ENCODE measurements at regions of chr7 and their contacts with region 1.

Region 1: DNA sequence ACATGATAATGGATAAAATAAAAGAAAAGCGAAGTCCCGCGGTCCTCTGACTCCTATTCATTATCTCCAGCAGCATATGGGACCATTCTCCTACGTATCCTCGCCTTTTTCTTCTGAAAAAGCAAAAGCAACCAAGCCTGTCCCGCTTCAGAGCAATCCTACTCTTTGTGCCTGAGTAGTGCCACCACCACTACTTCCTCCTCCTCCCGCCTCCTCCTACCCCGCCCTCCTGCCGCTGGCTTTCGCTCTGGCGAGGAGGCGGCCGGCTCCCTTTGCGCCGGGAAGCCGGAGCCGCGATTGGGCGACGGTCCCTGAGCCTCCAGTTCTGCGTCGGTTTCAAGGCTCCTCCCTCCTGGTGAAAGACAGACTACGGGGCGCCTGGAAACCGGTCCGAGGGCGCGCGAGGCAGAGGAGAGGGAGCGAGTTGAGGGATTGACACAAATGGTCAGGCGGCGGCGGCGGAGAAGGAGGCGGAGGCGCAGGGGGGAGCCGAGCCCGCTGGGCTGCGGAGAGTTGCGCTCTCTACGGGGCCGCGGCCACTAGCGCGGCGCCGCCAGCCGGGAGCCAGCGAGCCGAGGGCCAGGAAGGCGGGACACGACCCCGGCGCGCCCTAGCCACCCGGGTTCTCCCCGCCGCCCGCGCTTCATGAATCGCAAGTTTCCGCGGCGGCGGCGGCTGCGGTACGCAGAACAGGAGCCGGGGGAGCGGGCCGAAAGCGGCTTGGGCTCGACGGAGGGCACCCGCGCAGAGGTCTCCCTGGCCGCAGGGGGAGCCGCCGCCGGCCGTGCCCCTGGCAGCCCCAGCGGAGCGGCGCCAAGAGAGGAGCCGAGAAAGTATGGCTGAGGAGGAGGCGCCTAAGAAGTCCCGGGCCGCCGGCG is at the start of gene FZD1:
- DNase-seq: peak; percentile 93
- H3K4me3 ChIP-seq: peak within 1 kb of the TSS; percentile 75
- CTCF ChIP-seq: peak; percentile 9

Region 2: GRCh38 chr7:91082852-91083495 is 181.3 kb before region 1 on chr7:
- CTCF ChIA-PET with region 1: interaction called, 10 read pairs
- POLR2A ChIA-PET with region 1: no interaction called
- DNase-seq: no peak
- H3K4me3 ChIP-seq: no peak overlapping the region
- CTCF ChIP-seq: peak; percentile 41

Region 3: GRCh38 chr7:91089382-91089963 is 174.8 kb before region 1 on chr7:
- CTCF ChIA-PET with region 1: interaction called, 15 read pairs
- POLR2A ChIA-PET with region 1: no interaction called
- DNase-seq: no peak
- H3K4me3 ChIP-seq: no peak overlapping the region; the same call in 1 of the 2 replicates
- CTCF ChIP-seq: peak; percentile 40

Region 4: DNA sequence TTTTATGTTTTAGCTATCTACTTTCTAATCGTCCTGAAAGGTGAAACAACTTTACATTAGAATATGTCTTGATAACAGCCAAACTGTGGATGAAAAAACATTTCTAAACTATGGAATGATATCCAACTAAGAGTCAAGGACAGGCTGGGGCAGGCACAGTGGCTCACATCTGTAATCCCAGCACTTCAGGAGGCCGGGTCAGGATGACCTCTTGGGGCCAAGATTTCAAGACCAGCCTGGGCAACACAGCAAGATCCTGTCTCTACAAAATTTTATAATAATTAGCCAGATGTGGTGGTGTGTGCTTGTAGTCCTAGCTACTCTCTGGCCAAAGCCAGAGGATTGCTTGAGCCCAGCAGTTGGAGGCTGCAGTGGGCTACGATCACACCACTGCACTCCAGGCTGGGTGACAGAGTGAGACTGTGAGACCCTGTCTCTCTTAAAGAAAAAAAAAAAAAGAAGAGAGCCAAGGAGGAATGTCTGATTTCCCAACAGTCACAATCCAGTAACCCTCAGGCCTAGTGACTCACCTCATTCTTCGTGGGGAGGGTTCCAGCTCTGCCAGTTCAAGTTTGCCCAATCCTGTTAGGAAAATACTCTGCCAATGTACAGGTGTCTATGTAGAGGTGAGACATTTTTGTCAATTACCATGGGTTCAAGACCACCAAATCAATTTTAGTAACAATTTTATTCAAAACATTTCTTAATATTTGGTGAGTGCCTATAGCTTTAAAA is 14.6 kb before region 1 on chr7:
- CTCF ChIA-PET with region 1: interaction called, 32 read pairs
- POLR2A ChIA-PET with region 1: no interaction called
- DNase-seq: no peak
- H3K4me3 ChIP-seq: no peak overlapping the region
- CTCF ChIP-seq: no peak

Measured in AG04449 (cell line).